ENCODE measurements at regions of chr7 and their contacts with region 1.

Region 1: DNA sequence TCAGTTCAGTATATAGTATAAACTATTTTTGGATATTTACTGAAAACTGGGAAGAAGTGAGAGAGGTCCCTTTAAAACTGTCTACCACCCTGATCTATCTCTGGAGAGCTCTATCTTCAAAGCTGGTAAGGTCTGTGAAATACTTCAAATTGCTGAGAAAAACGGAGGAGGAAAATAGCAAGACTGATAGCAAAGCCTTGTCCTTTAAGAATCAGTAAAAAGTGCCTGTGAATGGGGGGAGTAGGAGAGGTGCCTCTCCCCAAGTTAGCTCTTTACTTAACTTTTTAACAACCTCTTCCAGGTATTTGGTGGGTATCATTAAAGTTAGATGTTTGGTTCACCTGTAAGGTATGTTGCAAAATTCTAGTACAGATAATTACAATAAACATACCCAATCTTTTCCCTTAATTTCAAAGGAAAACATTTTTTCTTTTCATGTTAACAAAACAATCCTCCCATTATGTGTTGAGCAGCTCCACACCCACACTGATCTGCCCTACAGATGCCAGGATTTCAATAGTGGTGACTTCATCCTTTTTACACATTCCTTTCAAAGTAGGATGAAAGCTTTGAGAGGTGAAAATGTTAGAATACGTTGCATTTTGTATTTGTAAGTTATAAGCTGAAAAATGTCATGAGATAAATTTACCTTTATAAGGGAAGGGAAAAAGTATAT is 149.2 kb downstream of the CRPPA start:
- DNase-seq: no peak
- ATAC-seq: no peak

Region 2: DNA sequence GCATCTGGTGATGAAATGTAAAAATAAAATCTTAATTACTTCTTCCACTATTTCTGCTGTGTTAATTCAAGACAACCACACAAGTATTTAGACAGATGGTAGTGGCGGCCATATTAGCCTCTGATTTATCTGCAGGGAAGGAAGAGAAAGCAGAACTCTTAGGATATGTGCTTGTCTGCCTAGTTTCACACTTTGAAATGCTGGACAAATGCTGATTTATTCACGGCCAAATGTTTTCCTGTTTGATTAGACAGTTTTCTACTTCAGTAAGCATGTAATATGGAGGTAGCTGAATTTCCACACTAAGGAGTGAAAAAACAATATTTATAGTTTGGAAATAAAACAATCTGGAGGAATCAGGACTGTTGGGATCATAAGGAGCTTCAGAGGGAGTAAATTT is 868.4 kb before region 1 on chr7:
- intact Hi-C with region 1: loop called (anchors 5 kb)
- DNase-seq: no peak
- ATAC-seq: no peak

Region 3: GRCh38 chr7:15937571-15937970 is 334.6 kb before region 1 on chr7:
- intact Hi-C with region 1: no loop called
- DNase-seq: no peak
- ATAC-seq: no peak